Activated T-helper 1 cell treated with anti-CD3 and anti-CD28 coated beads, Interleukin-12 subunit alpha, Interleukin-12 subunit beta, Interleukin-2, Interleukin-4 antibody, amounts not matched to agents 30 ng/mL and 10 ng/mL and 1 ng/mL, durations not matched to agents 14 hours and 24 hours and 36 hours (primary cell): ENCODE measurements at regions of chr7 and their contacts with region 1.

Region 1: GRCh38 chr7:28626624-28627262 is 214.4 kb downstream of the CREB5 start:
- DNase-seq: no peak
- H3K4me3 Mint-ChIP-seq: no peak overlapping the region
- H3K27ac Mint-ChIP-seq: no peak overlapping the region
- H3K4me1 Mint-ChIP-seq: no peaks in the 10 kb centered on the region
- H3K27me3 Mint-ChIP-seq: peaks cover 6% of the 10 kb centered on the region

Region 2: GRCh38 chr7:28389504-28390395 is 237.0 kb before region 1 on chr7:
- intact Hi-C with region 1: loop called (anchors 1 kb)
- DNase-seq: no peak
- H3K4me3 Mint-ChIP-seq: no peak overlapping the region
- H3K27ac Mint-ChIP-seq: no peak overlapping the region
- H3K4me1 Mint-ChIP-seq: no peaks in the 10 kb centered on the region
- H3K27me3 Mint-ChIP-seq: peaks cover 14% of the 10 kb centered on the region